HEK293 (cell line): ENCODE measurements at regions of chrX and their contacts with region 1.

Region 1: DNA sequence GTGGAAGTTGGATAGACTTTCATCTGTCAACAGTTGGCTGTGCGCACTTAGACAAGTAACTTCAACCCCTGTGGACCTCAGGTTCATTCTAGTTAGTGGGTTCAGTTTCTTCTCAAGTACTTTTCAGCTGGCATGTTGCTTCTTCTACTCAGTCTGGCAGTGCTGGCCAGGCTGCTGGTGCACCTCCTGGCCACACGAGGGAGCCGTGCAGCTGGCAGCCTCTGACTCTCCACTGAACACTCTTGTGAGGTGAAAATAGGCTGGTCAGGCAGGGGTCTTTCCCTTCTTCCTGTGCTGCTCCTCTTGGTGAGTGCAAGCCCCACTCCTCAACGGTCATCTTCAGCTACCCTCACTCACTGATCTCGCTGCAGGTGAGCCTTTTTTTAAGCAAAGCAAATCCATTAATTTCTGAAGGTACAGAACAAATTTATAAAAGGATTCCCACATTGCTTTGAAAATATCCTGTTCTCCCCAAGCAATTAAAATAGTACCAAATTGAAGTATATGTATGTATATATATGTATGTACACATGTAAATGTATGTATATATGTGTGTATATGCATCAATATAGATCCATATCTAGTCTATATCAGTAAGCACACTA is 30.6 kb downstream of the LONRF3 start:
- H3K4me3 ChIP-seq: peak overlapping the region; percentile 9; the same call in 1 of the 2 replicates
- H3K27ac ChIP-seq: no peak overlapping the region
- H3K4me1 ChIP-seq: 0 out of 2 replicates have a peak, but pooled peaks cover 3% of the 10 kb centered on the region
- CTCF ChIP-seq: peak; percentile 70

Region 2: GRCh38 chrX:118847676-118848075 is 157.3 kb before region 1 on chrX:
- CTCF ChIA-PET with region 1: interaction called, 15 read pairs
- POLR2A ChIA-PET with region 1: no interaction called
- H3K4me3 ChIP-seq: no peak overlapping the region
- H3K27ac ChIP-seq: no peak overlapping the region
- H3K4me1 ChIP-seq: no peaks in the 10 kb centered on the region
- CTCF ChIP-seq: peak; percentile 64; the same call in 1 of the 2 replicates

Region 3: GRCh38 chrX:118974088-118974907 is 30.7 kb before region 1 on chrX and contains the start of gene LONRF3:
- CTCF ChIA-PET with region 1: interaction called, 10 read pairs
- POLR2A ChIA-PET with region 1: no interaction called
- H3K4me3 ChIP-seq: peak within 1 kb of the TSS; percentile 44
- H3K27ac ChIP-seq: peak within 1 kb of the TSS; percentile 72; the same call in 1 of the 2 replicates
- H3K4me1 ChIP-seq: no peaks in the 10 kb centered on the region
- CTCF ChIP-seq: no peak

Region 4: GRCh38 chrX:118990512-118991227 is 14.4 kb before region 1 on chrX:
- CTCF ChIA-PET with region 1: interaction called, 11 read pairs
- POLR2A ChIA-PET with region 1: no interaction called
- H3K4me3 ChIP-seq: no peak overlapping the region
- H3K27ac ChIP-seq: no peak overlapping the region
- H3K4me1 ChIP-seq: no peaks in the 10 kb centered on the region
- CTCF ChIP-seq: no peak

Region 5: DNA sequence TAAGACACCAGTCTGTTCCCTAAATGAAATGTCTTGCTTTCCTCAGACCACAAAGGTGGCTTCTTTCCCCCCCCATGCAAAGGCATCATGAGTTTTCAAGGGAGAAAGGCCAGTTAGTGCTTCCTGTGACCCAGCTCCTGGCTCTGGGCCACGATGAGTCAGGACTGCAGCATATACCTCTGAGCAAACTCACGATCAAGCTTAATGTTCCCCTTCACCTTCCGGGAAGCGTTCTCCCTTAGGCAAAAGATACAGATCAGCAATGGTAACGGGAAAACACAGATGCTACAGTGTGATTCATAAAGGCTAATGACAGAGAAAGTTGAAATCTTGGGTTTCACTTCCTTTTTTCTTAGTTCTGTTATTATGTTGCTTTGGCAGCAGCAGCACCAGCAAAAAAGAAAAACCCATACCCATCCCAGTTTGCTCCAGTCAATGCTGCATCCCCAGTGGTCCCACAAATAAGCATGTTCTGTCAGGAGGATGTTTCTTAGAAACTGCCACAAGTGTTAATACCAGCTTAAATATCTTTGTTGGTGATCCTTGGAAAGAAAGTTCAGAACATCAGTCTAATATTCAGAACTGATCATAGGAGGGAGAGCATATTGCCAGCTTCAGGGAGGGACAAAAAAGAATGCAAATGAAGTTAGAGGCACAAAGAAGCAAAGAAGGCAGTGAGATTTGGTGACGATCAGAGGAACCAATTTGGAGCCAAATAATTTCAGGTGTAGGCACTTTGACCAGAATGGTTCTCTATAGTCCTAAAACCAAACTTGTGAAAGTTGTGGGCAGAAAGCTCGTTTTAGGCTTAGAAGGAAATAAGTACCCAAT is 10.6 kb after region 1 on chrX:
- CTCF ChIA-PET with region 1: interaction called, 10 read pairs
- POLR2A ChIA-PET with region 1: no interaction called
- H3K4me3 ChIP-seq: no peak overlapping the region
- H3K27ac ChIP-seq: no peak overlapping the region
- H3K4me1 ChIP-seq: no peaks in the 10 kb centered on the region
- CTCF ChIP-seq: no peak

Region 6: DNA sequence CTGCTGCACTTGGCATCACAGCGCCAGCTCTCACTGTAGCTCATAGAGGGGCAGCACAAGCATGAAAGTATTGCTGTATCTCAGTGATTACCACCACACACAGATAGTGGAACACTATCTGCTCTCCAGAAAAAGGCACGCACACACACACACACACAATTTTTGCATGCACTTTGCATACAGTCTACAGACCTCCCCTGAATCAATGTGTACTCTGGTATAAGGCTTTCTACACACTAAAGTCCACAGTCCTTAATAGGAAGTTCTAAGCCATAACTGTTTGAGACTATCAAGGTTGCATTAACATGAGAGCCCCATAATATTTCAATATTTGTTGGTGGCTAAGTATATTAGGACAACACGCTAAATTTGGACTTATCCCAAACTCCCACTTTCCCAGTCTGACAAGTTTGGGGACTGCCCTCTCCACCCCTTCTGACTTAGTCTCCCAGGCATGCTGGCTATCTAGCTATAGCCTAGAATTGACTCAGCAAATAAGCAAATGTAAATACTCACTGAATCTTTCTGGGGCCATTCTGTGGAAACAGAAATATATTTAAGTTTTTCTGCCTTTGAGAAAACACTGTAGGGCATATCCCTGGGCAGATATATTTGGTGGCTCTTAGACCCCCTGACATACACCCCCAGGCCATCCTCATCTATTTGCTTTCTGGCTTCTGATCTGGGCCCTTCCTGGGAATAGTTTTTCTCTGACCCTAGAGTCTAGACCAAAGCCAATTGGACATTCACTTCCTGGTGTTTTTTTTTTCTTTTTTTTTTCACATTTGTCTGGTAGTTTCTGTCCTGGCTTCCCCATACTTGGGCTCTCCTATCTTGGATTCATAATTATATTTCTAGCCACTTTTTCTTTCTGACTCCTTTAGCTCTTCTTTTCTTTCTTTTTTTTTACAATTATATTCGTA is 31.3 kb after region 1 on chrX:
- CTCF ChIA-PET with region 1: no interaction called
- POLR2A ChIA-PET with region 1: no interaction called
- H3K4me3 ChIP-seq: no peak overlapping the region
- H3K27ac ChIP-seq: no peak overlapping the region
- H3K4me1 ChIP-seq: no peaks in the 10 kb centered on the region
- CTCF ChIP-seq: no peak

Region 7: GRCh38 chrX:119067023-119067739 is 62.2 kb after region 1 on chrX:
- CTCF ChIA-PET with region 1: interaction called, 42 read pairs
- POLR2A ChIA-PET with region 1: interaction called, 6 read pairs
- H3K4me3 ChIP-seq: no peak overlapping the region
- H3K27ac ChIP-seq: no peak overlapping the region
- H3K4me1 ChIP-seq: no peaks in the 10 kb centered on the region
- CTCF ChIP-seq: peak; percentile 43; the same call in 1 of the 2 replicates